Ascending aorta (tissue), 2 donors: ENCODE measurements at regions of chr11 and their contacts with region 1.

Region 1: DNA sequence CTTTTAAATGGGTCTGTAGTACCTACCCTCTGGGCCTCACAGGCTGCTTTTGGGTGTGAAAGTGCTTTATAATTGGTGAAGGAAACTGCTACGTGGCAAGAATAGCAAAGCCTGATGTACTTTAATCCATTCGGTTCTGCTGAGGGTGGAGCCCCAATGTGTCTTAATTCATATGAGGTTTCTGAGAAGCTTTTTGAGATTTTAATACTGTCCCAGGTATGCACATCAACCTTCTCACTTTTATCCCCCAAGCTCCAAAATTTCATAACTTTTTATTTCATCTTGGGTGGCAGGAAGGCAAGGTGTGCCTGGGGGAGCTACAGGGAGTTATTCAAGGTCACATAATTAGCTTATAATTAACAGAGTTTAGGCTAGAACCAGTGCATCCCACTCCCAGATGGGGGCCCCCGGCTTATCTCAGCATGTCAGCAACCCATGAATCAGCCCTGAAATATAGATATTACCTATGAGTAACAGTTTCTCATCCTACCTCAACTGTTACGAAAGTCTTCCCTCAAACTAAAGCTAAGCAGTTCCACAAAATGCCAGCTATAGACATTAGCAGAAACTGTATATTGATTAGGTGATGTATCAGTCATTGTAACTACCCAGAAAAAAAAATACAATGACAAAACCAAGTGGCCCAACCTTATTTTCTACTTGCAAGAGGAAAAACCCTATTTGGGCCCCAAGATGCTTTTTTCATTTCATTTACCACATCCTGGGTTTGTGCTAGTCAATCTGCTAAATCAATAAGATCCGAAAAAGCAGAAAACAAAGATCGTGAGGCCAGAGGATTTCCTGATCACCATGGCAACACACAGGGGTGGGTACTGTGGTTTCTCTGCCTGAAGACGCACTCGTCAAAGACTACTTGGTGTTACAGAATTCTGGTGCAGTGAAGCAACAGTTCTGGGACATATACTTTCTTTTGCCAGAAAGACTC is 26.7 kb downstream of the CD44 start:
- DNase-seq: peak in 1 of 2 donors; percentile 84
- H3K4me3 ChIP-seq: no peak overlapping the region
- H3K27ac ChIP-seq: peak overlapping the region; percentile 87 to 89
- H3K4me1 ChIP-seq: peaks cover 23 to 87% of the 10 kb centered on the region in 2 donors
- H3K27me3 ChIP-seq: no peaks in the 10 kb centered on the region
- CTCF ChIP-seq: no peak

Region 2: GRCh38 chr11:34640050-34640923 is 525.4 kb before region 1 on chr11:
- intact Hi-C with region 1: no loop called
- DNase-seq: no peak
- H3K4me3 ChIP-seq: no peak overlapping the region
- H3K27ac ChIP-seq: no peak overlapping the region
- H3K4me1 ChIP-seq: no peaks in the 10 kb centered on the region
- H3K27me3 ChIP-seq: no peaks in the 10 kb centered on the region
- CTCF ChIP-seq: no peak

Region 3: GRCh38 chr11:35082321-35083182 is 83.1 kb before region 1 on chr11:
- intact Hi-C with region 1: no loop called
- DNase-seq: peak; percentile 37 to 81
- H3K4me3 ChIP-seq: no peak overlapping the region
- H3K27ac ChIP-seq: peak overlapping the region; percentile 67 to 69
- H3K4me1 ChIP-seq: peaks cover 13 to 42% of the 10 kb centered on the region in 2 donors
- H3K27me3 ChIP-seq: no peaks in the 10 kb centered on the region
- CTCF ChIP-seq: no peak

Region 4: DNA sequence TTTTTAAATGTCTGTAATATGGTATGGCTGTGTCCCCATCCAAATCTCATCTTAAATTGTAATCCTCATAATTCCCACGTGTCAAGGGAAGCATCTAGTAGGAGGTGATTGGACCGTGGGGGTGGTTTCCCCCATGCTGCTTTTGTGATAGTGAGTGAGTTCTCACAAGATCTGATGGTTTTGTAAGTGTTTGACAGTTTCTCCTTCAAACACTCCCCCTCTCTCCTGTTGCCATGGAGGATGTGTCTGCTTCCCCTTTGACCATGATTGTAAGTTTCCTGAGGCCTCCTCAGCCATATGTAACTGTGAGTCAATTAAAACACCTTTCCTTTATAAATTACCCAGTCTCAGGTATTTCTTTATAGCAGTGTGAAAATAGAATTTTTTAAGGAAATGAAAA is 57.8 kb before region 1 on chr11:
- intact Hi-C with region 1: no loop called
- DNase-seq: no peak
- H3K4me3 ChIP-seq: no peak overlapping the region
- H3K27ac ChIP-seq: no peak overlapping the region
- H3K4me1 ChIP-seq: peaks cover 0 to 21% of the 10 kb centered on the region in 2 donors
- H3K27me3 ChIP-seq: no peaks in the 10 kb centered on the region
- CTCF ChIP-seq: no peak

Region 5: GRCh38 chr11:35138943-35139721 is 26.6 kb before region 1 on chr11 and contains the start of gene CD44:
- intact Hi-C with region 1: loop called (anchors 2 kb)
- DNase-seq: peak; percentile 74 to 93
- H3K4me3 ChIP-seq: peak within 1 kb of the TSS; percentile 70 to 83
- H3K27ac ChIP-seq: peak within 1 kb of the TSS; percentile 90 to 98
- H3K4me1 ChIP-seq: peaks cover 11 to 27% of the 10 kb centered on the region in 2 donors
- H3K27me3 ChIP-seq: no peaks in the 10 kb centered on the region
- CTCF ChIP-seq: peak in 1 of 3 experiments; percentile 9
- total RNA-seq, gene CD44: 188 TPM

Region 6: GRCh38 chr11:35223371-35223796 is 57.7 kb after region 1 on chr11:
- intact Hi-C with region 1: no loop called
- DNase-seq: no peak
- H3K4me3 ChIP-seq: no peak overlapping the region
- H3K27ac ChIP-seq: peak overlapping the region; percentile 29 to 61
- H3K4me1 ChIP-seq: peaks cover 0 to 1% of the 10 kb centered on the region in 2 donors
- H3K27me3 ChIP-seq: no peaks in the 10 kb centered on the region
- CTCF ChIP-seq: no peak

Region 7: GRCh38 chr11:35246745-35247144 is 81.0 kb after region 1 on chr11:
- intact Hi-C with region 1: loop called (anchors 5 kb)
- DNase-seq: peak in 1 of 2 donors; percentile 88
- H3K4me3 ChIP-seq: no peak overlapping the region
- H3K27ac ChIP-seq: peak overlapping the region; percentile 91 to 95
- H3K4me1 ChIP-seq: peaks cover 9 to 22% of the 10 kb centered on the region in 2 donors
- H3K27me3 ChIP-seq: no peaks in the 10 kb centered on the region
- CTCF ChIP-seq: no peak